AG04449 (cell line): ENCODE measurements at regions of chr7 and their contacts with region 1.

Region 1: GRCh38 chr7:7595451-7595850 is 28.8 kb downstream of the MIOS start:
- DNase-seq: no peak
- H3K4me3 ChIP-seq: no peak overlapping the region
- CTCF ChIP-seq: no peak

Region 2: GRCh38 chr7:7761340-7761980 is 166.0 kb after region 1 on chr7:
- CTCF ChIA-PET with region 1: interaction called, 13 read pairs
- POLR2A ChIA-PET with region 1: no interaction called
- DNase-seq: no peak
- H3K4me3 ChIP-seq: peak overlapping the region; percentile 53
- CTCF ChIP-seq: no peak

Region 3: GRCh38 chr7:8190119-8190895 is 594.9 kb after region 1 on chr7:
- CTCF ChIA-PET with region 1: interaction called, 21 read pairs
- POLR2A ChIA-PET with region 1: no interaction called
- DNase-seq: no peak
- H3K4me3 ChIP-seq: no peak overlapping the region
- CTCF ChIP-seq: peak; percentile 53

Region 4: DNA sequence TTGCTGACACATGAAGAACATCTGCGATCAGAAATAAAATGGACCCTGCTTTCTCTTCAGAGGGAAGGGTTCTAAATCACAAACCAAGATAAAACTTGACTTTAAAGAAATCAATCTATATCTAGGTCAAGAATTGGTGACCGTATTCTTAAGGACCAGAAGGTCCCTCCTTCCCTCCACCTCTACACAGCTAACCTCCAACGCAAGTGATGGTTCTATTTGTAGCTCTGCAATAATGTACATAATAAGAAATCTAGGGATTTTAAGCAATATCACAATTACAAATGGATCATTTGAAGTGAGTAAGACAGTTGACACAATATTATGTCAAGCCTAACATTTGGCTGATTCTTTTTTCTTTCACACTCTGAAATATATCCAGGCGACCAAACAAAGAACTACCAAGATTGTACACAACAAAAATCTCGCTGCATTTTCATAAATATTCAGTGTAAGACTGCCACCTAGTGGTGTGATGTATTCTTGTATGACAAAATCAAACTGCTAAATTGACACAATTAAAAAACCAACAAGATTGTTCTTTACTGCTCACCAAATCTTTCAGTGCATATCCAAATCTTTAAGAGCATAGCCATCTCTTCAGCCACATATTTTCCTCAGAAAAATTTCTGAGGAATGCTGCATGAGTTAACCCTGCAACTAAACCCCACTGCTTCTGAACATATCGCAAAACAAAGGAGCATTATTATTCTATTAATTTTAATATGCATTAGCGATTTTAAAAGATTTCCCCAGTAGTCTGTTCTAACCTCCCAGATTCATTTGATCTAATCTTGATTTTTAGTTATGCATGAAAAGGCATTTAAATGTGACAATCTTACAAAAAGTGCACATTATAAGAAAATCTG is 622.0 kb after region 1 on chr7:
- CTCF ChIA-PET with region 1: interaction called, 49 read pairs
- POLR2A ChIA-PET with region 1: no interaction called
- DNase-seq: peak; percentile 19
- H3K4me3 ChIP-seq: no peak overlapping the region
- CTCF ChIP-seq: peak; percentile 20

Region 5: DNA sequence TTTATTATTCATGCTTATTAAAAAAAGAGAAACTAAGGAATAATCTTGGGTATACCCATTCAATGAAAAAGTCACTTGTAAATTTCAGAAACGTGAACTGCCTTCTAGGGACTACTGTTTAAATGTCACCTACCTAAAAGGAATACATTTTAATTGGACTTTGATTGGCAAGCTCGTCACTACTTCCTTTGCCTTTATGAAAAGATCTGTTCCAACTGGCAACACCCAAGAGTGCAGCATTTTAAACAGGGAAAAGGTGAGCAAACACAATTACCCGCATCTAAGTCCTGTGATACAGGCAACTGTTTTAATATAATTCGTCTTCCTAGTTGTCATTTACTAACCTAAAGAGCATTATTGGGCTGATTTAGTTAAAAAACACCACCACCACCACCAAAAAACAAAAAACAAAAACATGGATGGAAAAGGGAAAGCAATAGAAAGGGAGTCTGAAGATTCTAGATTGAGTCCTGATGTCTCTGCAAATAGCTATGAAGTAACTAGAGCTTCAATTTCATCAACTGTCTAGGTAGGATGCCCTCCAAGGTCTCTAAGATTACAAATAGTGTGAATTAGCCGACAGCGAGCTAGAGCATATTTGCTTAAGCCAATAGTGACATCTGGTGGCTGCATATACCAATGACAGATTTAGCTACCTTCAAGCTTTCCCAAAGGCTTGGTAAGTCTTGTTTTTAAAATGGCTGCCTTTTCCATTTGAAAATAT is 700.3 kb after region 1 on chr7:
- CTCF ChIA-PET with region 1: interaction called, 10 read pairs
- POLR2A ChIA-PET with region 1: no interaction called
- DNase-seq: peak; percentile 65
- H3K4me3 ChIP-seq: no peak overlapping the region
- CTCF ChIP-seq: peak; percentile 61